ENCODE measurements at regions of chr12 and their contacts with region 1.

Region 1: GRCh38 chr12:51238510-51239334 is at the start of gene DAZAP2:
- DNase-seq: peak; percentile 91 to 97 (median 94)
- ATAC-seq: peak; percentile 89 to 90
- H3K4me3 Mint-ChIP-seq: peak within 1 kb of the TSS; percentile 91 to 99 (median 94)
- H3K27ac Mint-ChIP-seq: peak within 1 kb of the TSS; percentile 97 to 100 (median 99)
- H3K4me1 Mint-ChIP-seq: peaks cover 27 to 49% (median 42%) of the 10 kb centered on the region in 4 donors
- H3K27me3 Mint-ChIP-seq: no peaks in the 10 kb centered on the region
- polyA plus RNA-seq, gene DAZAP2: 1,276 to 1,317 (median 1,313) TPM

Region 2: DNA sequence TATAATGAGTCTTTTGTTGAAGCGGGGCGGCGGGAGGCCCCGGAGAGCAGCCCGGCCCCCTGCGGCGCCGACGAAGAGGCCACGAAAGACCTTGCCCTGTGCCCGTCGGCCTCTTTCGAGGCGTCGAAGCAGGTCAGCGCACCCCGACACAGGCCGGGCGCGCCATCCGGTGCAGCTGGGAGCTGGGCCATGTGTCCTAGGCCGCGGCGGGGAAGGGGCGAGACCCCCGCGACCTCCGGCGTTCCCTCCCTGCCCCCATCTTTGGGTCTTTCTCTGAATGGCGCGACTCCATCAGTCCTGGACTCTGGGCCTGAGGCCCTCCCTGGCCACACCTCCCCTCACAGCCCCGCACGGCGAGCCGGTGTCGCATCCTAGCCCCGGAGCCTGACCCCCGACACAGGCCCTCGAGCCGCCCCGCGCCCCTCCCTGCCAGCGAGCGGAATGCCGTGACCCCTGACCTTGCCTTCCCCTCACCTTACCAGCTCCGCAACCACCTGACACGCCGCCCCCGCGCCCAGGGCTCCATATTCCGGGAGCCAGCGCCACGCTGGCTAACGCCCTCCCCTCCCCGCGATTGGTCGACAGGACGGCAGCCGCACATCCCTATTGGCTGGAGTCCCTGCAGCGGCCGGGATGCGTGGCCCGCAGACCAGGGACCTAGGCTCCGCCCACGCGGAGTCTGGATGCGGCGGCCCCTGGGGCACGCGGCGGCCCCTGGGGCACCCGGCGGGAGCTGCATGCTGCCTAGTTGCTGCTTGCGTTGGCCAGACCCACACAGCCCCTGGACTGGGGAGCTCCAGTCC is 212.7 kb before region 1 on chr12 and contains the start of gene SLC11A2:
- POLR2A ChIA-PET with region 1: interaction called, 18 read pairs
- DNase-seq: peak; percentile 83 to 94 (median 87)
- ATAC-seq: peak; percentile 90 to 92
- H3K4me3 Mint-ChIP-seq: peak within 1 kb of the TSS; percentile 94 to 99 (median 96)
- H3K27ac Mint-ChIP-seq: peak within 1 kb of the TSS; percentile 87 to 98 (median 96)
- H3K4me1 Mint-ChIP-seq: peaks cover 36 to 68% (median 61%) of the 10 kb centered on the region in 4 donors
- H3K27me3 Mint-ChIP-seq: no peaks in the 10 kb centered on the region
- polyA plus RNA-seq, gene SLC11A2: 6.9 to 17.2 (median 9.0) TPM

Region 3: DNA sequence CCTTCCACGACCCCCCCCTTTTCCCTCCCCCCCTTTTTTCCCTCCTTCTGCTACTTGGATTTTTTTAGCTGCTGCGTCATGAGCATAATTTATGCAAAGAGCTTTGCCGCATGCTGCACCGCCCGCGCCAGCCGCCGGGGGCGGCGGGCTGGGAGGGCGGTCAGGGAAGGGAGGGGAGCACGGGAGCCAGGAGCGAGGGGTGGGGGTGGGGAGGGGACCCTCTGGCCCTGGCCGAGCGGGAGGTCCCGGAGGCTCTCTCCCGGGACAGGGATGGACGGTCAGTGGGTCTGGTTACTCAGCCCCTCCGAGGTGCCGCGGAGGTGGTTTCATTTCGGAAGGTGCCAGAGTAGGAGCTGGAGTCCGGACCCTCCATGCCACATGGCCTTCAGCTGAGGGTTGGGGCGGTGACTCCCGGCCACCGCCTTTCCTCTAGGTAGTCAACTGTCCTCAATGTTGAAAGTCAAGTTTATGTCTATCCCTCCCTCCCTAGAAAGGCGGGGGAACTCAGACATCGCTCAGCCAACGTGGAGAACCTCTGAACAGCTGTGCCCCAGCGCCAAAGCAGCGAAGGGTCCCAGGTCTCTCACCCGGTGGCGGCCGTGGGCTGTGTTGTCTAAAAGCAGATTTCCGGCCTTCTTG is 20.6 kb before region 1 on chr12 and contains the start of gene POU6F1:
- POLR2A ChIA-PET with region 1: interaction called, 204 read pairs
- DNase-seq: peak; percentile 57 to 85 (median 71)
- ATAC-seq: peak; percentile 77 to 83
- H3K4me3 Mint-ChIP-seq: peak within 1 kb of the TSS; percentile 90 to 97 (median 92)
- H3K27ac Mint-ChIP-seq: peak within 1 kb of the TSS; percentile 93 to 98 (median 97)
- H3K4me1 Mint-ChIP-seq: peaks cover 17 to 23% (median 21%) of the 10 kb centered on the region in 4 donors
- H3K27me3 Mint-ChIP-seq: no peaks in the 10 kb centered on the region
- polyA plus RNA-seq, gene POU6F1: 0.62 to 1.8 (median 1.7) TPM

Region 4: GRCh38 chr12:51320695-51321320 is 82.1 kb after region 1 on chr12:
- POLR2A ChIA-PET with region 1: interaction called, 19 read pairs
- DNase-seq: no peak
- ATAC-seq: no peak
- H3K4me3 Mint-ChIP-seq: peak overlapping the region; percentile 74 to 99 (median 97)
- H3K27ac Mint-ChIP-seq: peak overlapping the region; percentile 91 to 100 (median 97)
- H3K4me1 Mint-ChIP-seq: peaks cover 41 to 93% (median 84%) of the 10 kb centered on the region in 4 donors
- H3K27me3 Mint-ChIP-seq: no peaks in the 10 kb centered on the region

Region 5: GRCh38 chr12:51341259-51342007 is 102.7 kb after region 1 on chr12:
- POLR2A ChIA-PET with region 1: interaction called, 21 read pairs
- DNase-seq: peak; percentile 33 to 86 (median 69)
- ATAC-seq: peak; percentile 93 to 98
- H3K4me3 Mint-ChIP-seq: peak overlapping the region; percentile 23 to 81 (median 59)
- H3K27ac Mint-ChIP-seq: peak overlapping the region in 9 of 10 donors; percentile 5 to 90 (median 83)
- H3K4me1 Mint-ChIP-seq: peaks cover 11 to 35% (median 18%) of the 10 kb centered on the region in 4 donors
- H3K27me3 Mint-ChIP-seq: no peaks in the 10 kb centered on the region